AG04450 (cell line): ENCODE measurements at regions of chr14 and their contacts with region 1.

Region 1: DNA sequence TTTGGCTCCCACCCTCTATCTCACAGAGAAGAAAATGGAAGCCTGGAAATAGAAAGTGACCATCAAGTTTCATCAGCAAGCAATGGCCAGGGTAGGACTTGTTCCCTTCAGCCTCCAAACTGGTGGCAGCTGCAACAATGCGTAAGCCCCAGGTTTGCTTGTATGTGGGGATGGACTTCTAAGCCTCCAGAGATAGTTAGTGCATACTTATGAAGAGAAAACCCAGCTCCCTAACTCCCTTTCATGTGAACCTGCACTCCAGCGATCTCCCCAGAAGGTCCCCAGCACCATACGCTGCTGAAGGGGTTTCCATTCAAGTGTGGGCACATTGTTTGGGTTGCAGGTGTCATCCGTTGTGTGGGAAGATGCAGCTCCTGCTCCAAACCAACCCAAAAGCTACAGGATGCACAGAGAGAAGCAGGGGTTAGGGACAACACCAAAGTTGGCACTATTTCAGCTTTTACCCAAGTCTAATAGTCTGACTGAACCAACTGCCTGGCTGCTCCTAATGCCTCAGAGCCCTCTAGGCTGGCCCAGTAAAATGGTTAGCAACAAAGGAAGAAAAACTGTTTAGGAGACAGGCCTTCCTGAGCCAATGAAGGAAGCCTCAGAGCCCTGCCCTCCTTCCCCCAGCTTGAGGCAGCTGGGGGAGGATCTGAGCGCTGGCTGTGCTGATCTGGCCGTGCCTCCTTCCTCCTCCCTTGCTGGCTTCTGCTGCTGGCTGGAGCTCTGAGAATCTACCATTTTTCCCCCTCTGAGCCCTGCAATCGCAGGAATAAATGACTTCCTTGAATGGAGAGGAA is 12.3 kb downstream of the ZFP36L1 start:
- DNase-seq: no peak
- H3K4me3 ChIP-seq: no peak overlapping the region
- H3K27ac ChIP-seq: peak overlapping the region; percentile 70
- H3K27me3 ChIP-seq: no peaks in the 10 kb centered on the region
- CTCF ChIP-seq: no peak

Region 2: DNA sequence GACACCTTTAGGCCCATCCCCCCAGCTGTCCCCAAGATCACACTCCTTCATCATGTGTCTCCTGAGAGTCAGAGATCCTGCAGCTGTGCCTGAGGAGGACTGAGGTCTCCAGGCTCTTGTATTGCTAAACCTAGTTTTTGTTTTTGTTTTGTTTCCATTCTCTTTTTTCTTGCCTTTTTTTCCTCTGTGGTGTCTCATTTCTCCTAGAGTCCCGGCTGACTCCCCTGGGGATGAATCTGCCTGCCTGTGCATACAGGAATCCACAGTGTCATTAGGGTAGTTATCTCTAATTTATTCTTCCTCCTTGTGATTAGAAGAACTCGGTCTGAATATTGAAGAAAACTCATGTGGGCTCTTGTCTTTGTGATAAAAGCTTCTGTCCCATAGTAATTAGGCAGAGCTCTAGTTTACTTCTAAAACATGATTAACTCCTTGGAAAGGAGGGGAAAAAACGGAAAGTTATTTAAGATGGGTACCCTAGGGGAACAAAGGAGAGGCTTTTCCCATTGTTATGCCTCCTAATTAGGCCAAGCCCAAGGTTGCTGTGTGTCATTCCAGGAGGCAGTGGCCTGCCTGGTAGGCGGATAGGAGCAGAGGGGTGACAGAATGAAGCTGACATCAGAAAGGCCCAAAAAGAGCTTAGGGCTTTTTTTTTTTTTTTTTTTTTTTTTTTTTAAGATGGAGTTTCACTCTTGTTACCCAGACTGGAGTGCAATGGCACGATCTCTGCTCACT is 330.8 kb before region 1 on chr14:
- CTCF ChIA-PET with region 1: no interaction called
- POLR2A ChIA-PET with region 1: interaction called, 11 read pairs
- DNase-seq: no peak
- H3K4me3 ChIP-seq: no peak overlapping the region
- H3K27ac ChIP-seq: no peak overlapping the region
- H3K27me3 ChIP-seq: no peaks in the 10 kb centered on the region
- CTCF ChIP-seq: no peak

Region 3: DNA sequence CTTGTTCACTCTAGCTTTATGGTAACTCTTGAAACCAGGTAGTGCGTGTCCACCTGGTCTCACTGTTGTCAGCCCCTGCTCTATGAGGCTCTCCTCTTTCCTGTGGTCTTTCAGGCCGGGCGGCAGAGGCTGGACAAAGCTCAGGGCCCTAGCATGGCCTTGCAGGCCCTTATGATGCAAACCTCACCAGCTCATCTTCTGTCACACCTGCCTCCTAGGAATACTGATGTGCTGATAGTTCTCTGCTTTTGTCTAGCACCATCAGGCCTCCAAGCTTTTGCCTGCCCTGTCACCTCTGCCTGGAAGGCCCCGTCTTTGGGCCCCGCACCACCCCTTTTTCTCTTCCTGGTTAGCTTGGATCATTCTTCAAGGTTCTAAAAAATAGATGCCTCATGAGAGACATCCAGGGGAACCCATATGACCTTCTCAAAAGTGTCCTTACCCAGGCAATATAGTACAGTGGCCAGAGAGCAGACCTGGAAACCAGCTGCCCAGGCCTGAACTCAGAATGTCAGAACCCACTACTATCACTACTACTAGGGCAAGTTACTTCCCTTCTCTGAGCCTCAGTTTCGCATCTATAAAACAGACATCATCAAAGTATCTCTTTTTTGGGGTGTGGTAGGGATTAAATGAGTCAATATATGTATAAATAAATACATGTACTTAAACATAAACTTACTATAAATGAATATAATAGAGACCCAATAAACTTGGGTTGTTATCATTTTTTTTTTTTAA is 79.4 kb before region 1 on chr14:
- CTCF ChIA-PET with region 1: no interaction called
- POLR2A ChIA-PET with region 1: no interaction called
- DNase-seq: no peak
- H3K4me3 ChIP-seq: no peak overlapping the region
- H3K27ac ChIP-seq: no peak overlapping the region
- H3K27me3 ChIP-seq: no peaks in the 10 kb centered on the region
- CTCF ChIP-seq: no peak